Left cardiac atrium (tissue), 4 donors: ENCODE measurements at regions of chr10 and their contacts with region 1.

Region 1: DNA sequence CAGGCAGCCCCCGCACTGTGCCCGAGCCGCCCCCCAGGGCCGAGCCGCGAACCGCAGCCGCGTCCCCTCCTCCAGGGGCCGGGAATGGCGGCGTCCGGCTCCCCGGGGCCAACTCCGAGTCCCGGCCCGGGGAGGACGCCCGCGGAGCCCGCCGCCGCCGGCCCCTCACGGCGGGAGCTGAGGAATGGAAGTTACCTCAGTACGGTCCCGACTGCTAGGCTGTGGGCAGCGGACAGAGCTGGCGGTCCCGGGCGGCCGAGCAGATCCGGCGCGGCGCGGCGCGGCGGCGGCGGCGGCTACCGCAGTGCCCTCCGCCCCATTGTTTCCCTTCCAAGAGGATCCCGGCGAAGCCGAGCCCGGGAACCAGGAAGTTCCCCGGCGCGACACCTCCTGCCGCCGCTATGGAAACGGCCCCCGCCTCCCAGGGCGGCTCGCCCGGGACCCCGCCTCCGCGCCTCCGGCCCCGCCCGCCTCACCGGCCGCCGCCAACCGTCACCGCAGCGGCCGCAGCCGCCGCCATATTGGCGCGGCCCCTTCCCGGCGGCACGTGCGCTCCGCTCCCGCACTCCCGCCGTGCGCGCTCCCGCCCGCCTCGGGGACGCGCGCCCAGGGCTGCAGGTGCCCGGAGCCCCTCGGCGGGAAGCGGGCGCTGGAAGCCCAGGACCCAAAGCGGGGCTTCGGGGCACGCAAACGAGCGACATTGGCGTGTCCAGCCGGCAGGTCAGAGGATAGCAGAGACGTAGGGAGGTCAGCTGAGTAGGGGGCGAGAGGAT is at the start of gene USP6NL:
- DNase-seq: peak; percentile 93
- ATAC-seq: peak; percentile 97 to 98
- total RNA-seq, gene USP6NL: 7.9 to 9.2 TPM

Region 2: DNA sequence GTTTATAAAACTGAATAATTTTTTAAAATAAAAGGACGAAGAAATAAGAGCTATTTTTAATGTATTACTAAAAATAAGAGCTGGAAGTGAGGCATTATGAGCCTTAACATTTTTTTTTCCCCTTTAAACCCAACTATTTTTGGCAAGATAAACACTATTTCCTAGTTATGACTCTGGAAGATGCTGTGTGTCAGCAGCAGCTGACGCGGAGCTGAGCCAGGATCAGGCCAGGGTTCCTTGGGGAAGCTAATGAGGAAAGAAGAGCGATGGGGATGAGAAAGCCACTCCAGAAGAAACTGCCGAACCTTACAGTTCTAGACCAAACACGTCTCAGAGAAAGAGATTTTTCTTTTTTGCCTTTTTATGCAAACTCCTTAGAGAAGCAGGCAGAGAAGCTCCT is 85.9 kb before region 1 on chr10:
- intact Hi-C with region 1: loop called in 1 of 2 experiments (anchors 10 kb)
- DNase-seq: peak; percentile 78
- ATAC-seq: peak; percentile 66 to 85

Region 3: DNA sequence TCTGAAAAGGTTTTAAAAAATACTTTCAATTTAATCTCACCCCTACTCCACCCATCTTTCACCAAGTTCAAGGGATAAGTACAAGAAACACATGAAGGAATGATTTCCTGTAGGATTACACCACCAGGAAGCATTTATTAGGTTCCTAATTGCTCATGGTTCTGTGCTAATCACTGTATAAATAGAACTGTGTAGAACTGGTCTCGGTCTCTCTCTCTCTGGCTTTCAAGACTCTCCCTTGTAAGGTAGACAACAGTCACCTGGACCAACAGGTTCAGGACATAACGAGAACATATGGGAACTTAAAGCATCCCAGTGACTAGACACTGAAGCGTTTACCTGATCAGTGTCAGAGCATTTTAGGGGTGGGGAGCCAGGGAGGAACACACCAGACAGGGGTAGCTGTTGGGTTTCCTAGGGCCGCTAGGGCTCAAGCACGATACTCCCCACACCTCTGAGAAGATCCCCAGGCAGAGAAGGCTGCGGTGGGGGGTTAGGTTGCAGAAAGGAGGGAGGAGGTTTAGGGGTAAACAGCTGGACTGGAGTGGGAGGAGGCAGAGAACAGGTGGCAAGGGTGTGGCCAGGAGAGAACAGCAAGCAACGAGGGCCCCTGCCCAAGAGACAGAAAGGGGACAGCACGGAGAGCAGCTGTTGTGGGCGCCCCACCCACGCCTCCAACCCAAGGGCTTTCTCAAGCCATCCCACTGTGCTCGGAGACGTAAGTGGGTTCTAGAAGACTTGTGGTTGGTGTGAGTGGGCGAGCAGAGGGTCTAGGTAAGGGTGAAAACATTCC is 52.5 kb after region 1 on chr10:
- intact Hi-C with region 1: no loop called
- DNase-seq: no peak
- ATAC-seq: no peak

Region 4: DNA sequence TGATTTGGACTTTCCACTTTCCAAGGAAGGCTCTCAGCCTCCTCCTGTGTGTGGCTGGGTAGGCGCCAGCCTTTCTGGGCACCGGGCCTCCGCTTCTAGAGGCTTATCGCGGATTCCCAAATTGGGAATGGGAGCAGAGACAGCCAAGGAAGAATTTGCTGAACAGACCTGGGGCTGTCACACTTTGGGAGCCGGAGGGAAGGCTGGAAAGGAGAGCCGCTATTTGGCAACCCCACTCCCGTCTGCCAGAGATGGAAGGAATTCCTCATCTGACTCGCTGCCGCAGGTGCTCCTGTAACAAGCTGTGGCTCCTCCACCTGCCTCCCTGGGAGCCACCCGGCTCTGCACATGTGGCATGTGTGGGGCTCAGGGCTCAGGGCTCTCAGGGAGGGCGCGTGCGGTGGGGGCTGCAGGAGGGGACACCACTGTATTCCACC is 79.9 kb after region 1 on chr10:
- intact Hi-C with region 1: loop called in 1 of 2 experiments (anchors 5 kb)
- DNase-seq: peak; percentile 36
- ATAC-seq: peak; percentile 76 to 77

Region 5: GRCh38 chr10:11724938-11725776 is 113.7 kb after region 1 on chr10:
- intact Hi-C with region 1: loop called in 1 of 2 experiments (anchors 10 kb)
- DNase-seq: no peak
- ATAC-seq: peak; percentile 84 to 94